PC-9 (cell line): ENCODE measurements at regions of chr15 and their contacts with region 1.

Region 1: GRCh38 chr15:35697549-35698299 is 151.8 kb upstream of the DPH6 start:
- DNase-seq: peak; percentile 58 to 66
- H3K4me3 ChIP-seq: no peak overlapping the region
- H3K27ac ChIP-seq: peak overlapping the region; percentile 48
- H3K4me1 ChIP-seq: peaks cover 21% of the 10 kb centered on the region
- H3K27me3 ChIP-seq: no peaks in the 10 kb centered on the region
- CTCF ChIP-seq: no peak; the same call in 1 of the 2 replicates

Region 2: DNA sequence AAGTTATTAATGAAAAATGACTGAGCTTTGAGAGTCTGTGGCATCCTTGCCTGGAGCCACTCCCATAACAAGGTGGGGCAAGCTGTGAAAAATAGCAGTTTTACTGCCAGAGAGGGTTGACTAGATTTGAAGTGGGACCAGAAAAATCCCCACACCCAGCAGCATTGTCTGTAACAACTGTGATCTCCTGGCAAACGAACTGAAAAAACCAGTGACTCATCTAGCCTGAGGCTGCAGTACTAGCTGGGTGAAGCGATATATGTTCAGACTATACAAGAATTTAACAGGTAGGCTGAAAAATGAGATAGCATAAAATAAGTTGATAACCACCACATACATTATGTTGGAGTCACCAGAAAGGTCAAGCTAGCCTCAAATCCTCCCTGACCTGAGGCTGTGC is 215.7 kb before region 1 on chr15:
- CTCF ChIA-PET with region 1: no interaction called
- POLR2A ChIA-PET with region 1: no interaction called
- intact Hi-C with region 1: no loop called
- DNase-seq: peak; percentile 76 to 82
- H3K4me3 ChIP-seq: no peak overlapping the region
- H3K27ac ChIP-seq: no peak overlapping the region
- H3K4me1 ChIP-seq: peaks cover 10% of the 10 kb centered on the region; the same call in 1 of the 2 replicates
- H3K27me3 ChIP-seq: no peaks in the 10 kb centered on the region
- CTCF ChIP-seq: no peak

Region 3: GRCh38 chr15:35545824-35546510 is 151.8 kb before region 1 on chr15 and contains the start of gene DPH6:
- CTCF ChIA-PET with region 1: interaction called, 4 read pairs
- POLR2A ChIA-PET with region 1: no interaction called
- intact Hi-C with region 1: loop called (anchors 5 kb)
- DNase-seq: peak; percentile 60 to 80
- H3K4me3 ChIP-seq: peak within 1 kb of the TSS; percentile 72
- H3K27ac ChIP-seq: peak within 1 kb of the TSS; percentile 94
- H3K4me1 ChIP-seq: peaks cover 10% of the 10 kb centered on the region
- H3K27me3 ChIP-seq: no peaks in the 10 kb centered on the region
- CTCF ChIP-seq: no peak
- total RNA-seq, gene DPH6: 14.8 and 19.2 TPM in 2 replicates

Region 4: GRCh38 chr15:35630526-35630925 is 67.2 kb before region 1 on chr15:
- CTCF ChIA-PET with region 1: no interaction called
- POLR2A ChIA-PET with region 1: no interaction called
- intact Hi-C with region 1: no loop called
- DNase-seq: peak; percentile 32 to 64
- H3K4me3 ChIP-seq: no peak overlapping the region
- H3K27ac ChIP-seq: 0 out of 2 replicates have a peak overlapping the region, but pooled peaks have one; percentile 24
- H3K4me1 ChIP-seq: peaks cover 13% of the 10 kb centered on the region
- H3K27me3 ChIP-seq: no peaks in the 10 kb centered on the region
- CTCF ChIP-seq: no peak

Region 5: GRCh38 chr15:35751413-35752133 is 53.8 kb after region 1 on chr15:
- CTCF ChIA-PET with region 1: no interaction called
- POLR2A ChIA-PET with region 1: no interaction called
- intact Hi-C with region 1: loop called (anchors 1 kb)
- DNase-seq: peak in 1 of 2 experiments; percentile 54
- H3K4me3 ChIP-seq: no peak overlapping the region
- H3K27ac ChIP-seq: no peak overlapping the region
- H3K4me1 ChIP-seq: no peaks in the 10 kb centered on the region
- H3K27me3 ChIP-seq: no peaks in the 10 kb centered on the region
- CTCF ChIP-seq: peak; percentile 71

Region 6: GRCh38 chr15:36106640-36107335 is 409.1 kb after region 1 on chr15:
- CTCF ChIA-PET with region 1: no interaction called
- POLR2A ChIA-PET with region 1: interaction called, 22 read pairs
- intact Hi-C with region 1: no loop called
- DNase-seq: no peak
- H3K4me3 ChIP-seq: no peak overlapping the region
- H3K27ac ChIP-seq: no peak overlapping the region
- H3K4me1 ChIP-seq: no peaks in the 10 kb centered on the region
- H3K27me3 ChIP-seq: no peaks in the 10 kb centered on the region
- CTCF ChIP-seq: no peak

Region 7: GRCh38 chr15:36501063-36501678 is 803.4 kb after region 1 on chr15:
- CTCF ChIA-PET with region 1: no interaction called
- POLR2A ChIA-PET with region 1: interaction called, 3 read pairs
- intact Hi-C with region 1: loop called (anchors 10 kb)
- DNase-seq: peak in 1 of 2 experiments; percentile 27
- H3K4me3 ChIP-seq: no peak overlapping the region
- H3K27ac ChIP-seq: no peak overlapping the region
- H3K4me1 ChIP-seq: no peaks in the 10 kb centered on the region
- H3K27me3 ChIP-seq: no peaks in the 10 kb centered on the region
- CTCF ChIP-seq: peak; percentile 59

Region 8: GRCh38 chr15:36883713-36884517 is 1186.2 kb after region 1 on chr15:
- CTCF ChIA-PET with region 1: no interaction called
- POLR2A ChIA-PET with region 1: no interaction called
- intact Hi-C with region 1: loop called (anchors 2 kb)
- DNase-seq: peak in 1 of 2 experiments; percentile 72
- H3K4me3 ChIP-seq: no peak overlapping the region
- H3K27ac ChIP-seq: no peak overlapping the region
- H3K4me1 ChIP-seq: no peaks in the 10 kb centered on the region
- H3K27me3 ChIP-seq: no peaks in the 10 kb centered on the region
- CTCF ChIP-seq: peak; percentile 86

Region 9: GRCh38 chr15:37134699-37135131 is 1437.0 kb after region 1 on chr15:
- CTCF ChIA-PET with region 1: no interaction called
- POLR2A ChIA-PET with region 1: no interaction called
- intact Hi-C with region 1: loop called (anchors 1 kb)
- DNase-seq: no peak
- H3K4me3 ChIP-seq: no peak overlapping the region
- H3K27ac ChIP-seq: no peak overlapping the region
- H3K4me1 ChIP-seq: no peaks in the 10 kb centered on the region
- H3K27me3 ChIP-seq: no peaks in the 10 kb centered on the region
- CTCF ChIP-seq: peak; percentile 71